ENCODE measurements at regions of chr1 and their contacts with region 1.

Region 1: GRCh38 chr1:12161662-12162458 is 4.9 kb upstream of the TNFRSF1B start:
- DNase-seq: peak; percentile 79
- H3K4me3 Mint-ChIP-seq: peak overlapping the region; percentile 56
- H3K27ac Mint-ChIP-seq: peak overlapping the region; percentile 96
- H3K4me1 Mint-ChIP-seq: peaks cover 68% of the 10 kb centered on the region
- H3K27me3 Mint-ChIP-seq: no peaks in the 10 kb centered on the region

Region 2: GRCh38 chr1:12047120-12047876 is 114.6 kb before region 1 on chr1:
- intact Hi-C with region 1: loop called (anchors 5 kb)
- DNase-seq: peak; percentile 72
- H3K4me3 Mint-ChIP-seq: no peak overlapping the region
- H3K27ac Mint-ChIP-seq: no peak overlapping the region
- H3K4me1 Mint-ChIP-seq: peaks cover 31% of the 10 kb centered on the region
- H3K27me3 Mint-ChIP-seq: no peaks in the 10 kb centered on the region

Region 3: DNA sequence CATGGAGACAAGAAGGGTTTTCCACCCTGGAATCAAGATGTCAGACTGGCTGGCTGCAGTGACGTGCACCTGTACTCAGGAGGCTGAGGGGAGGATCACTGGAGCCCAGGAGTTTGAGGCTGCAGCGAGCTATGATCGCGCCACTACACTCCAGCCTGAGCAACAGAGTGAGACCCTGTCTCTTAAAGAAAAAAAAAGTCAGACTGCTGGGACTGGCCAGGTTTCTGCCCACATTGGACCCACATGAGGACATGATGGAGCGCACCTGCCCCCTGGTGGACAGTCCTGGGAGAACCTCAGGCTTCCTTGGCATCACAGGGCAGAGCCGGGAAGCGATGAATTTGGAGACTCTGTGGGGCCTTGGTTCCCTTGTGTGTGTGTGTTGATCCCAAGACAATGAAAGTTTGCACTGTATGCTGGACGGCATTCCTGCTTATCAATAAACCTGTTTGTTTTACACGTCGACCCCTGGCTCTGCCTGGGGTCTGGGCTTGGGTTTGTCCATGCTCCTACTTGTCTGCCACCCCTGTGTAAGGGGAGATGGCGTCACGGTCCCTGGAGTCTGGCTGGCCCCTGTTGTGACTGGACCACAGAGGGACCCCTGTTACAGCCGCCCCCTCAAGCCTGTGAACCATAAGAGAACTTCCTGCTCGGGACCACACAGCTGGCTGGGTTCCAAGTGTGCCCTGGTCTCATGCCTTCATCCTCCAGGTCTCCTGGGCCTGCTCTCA is 47.1 kb after region 1 on chr1:
- intact Hi-C with region 1: loop called (anchors 2 kb)
- DNase-seq: peak; percentile 71
- H3K4me3 Mint-ChIP-seq: no peak overlapping the region
- H3K27ac Mint-ChIP-seq: peak overlapping the region; percentile 37
- H3K4me1 Mint-ChIP-seq: peaks cover 29% of the 10 kb centered on the region
- H3K27me3 Mint-ChIP-seq: peaks cover 2% of the 10 kb centered on the region